ENCODE measurements at regions of chr9 and their contacts with region 1.

Region 1: DNA sequence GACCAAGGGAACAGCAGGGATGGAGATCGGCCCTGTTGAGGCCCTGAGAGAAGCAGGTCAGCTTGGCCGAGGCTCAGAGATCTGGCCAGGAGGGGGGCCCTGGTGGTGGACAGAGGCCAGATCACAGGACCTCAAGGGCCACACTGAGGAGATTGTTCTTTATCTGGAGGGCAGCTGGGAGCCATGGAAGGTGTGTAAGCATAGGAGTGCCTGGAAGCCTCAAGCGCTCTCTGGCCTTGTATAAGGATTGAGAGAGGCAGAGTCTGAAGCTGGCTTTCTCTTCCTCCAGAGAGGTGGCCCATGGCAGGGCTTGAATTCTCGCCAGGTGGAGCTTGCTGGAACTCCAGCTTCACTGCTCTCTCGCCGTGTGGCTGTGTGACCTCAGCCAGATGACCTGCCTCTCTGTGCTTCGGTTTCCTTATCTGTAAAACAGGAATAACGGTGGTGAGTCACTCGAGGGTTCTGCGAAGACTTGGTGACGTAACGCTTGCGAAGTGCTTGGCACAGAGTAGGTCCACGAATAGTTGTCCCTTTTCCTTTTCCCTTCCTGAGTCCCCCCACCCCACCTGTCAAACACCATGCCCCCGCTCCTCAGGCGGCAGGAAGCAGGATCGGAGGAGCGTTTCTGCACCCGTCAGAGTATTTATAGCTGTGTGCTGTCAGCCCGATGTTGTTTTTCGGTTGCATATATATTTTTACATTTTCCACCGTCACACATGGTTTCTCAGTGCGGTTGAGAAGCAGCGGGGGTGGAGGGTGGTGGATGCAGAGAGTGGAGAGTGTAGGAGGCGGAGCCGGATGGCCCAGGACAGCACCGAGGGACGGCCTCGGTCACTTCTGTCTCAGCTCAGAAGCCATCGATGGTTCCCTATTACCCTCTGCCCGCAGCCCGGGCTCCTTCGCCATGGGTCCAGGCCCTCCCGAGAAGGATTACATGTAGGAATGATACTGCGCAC is 17.0 kb upstream of the CRB2 start:
- DNase-seq: peak; percentile 76
- ATAC-seq: peak; percentile 56
- H3K4me3 Mint-ChIP-seq: peak overlapping the region; percentile 85
- H3K27ac Mint-ChIP-seq: peak overlapping the region; percentile 96
- H3K4me1 Mint-ChIP-seq: peaks cover 97% of the 10 kb centered on the region
- H3K27me3 Mint-ChIP-seq: no peaks in the 10 kb centered on the region
- CTCF ChIP-seq: no peak

Region 2: DNA sequence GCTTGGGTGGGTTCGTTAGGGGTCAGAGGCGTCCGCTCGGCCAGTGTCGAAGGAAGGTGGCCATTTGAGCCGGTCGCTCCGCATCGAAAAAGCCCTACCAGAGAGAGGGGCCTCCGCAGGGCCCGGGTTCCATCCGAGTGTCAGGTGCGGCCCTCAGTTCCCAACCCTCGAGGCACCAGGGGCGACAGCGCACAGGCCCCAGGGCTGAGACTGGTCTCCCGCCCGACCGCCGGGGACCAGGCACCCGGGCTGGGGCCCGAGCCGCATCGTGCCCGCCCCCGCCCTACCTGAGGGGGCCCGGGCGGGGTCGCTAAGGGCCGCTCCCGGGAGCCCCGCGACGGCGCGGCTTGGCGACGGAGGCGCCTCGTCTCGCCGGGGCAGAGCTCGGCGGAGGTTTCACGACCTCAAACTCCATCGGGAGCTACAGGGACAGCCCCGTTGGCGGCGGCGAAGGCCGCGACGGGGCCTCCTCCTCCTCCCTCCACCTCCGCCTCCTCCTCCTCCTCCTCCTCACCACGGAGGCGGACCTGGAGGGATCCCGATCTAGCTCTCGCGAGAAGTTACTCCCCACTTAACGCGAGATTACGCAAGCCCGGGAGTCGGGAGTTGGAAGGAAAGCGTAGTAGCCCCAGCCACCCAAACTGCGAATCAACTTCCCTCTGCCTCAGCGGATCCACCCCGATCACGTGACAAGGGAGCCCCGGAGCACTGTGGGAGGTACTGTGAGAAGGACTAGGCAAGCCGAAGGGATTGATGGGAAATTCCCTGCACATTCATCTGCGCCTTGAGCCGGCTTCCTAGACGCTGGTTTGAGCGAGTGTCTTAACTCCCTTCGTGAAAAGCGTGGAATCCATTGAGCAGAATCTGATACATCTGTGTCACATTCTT is 433.9 kb before region 1 on chr9 and contains the start of gene RC3H2:
- CTCF ChIA-PET with region 1: no interaction called
- POLR2A ChIA-PET with region 1: interaction called, 5 read pairs
- intact Hi-C with region 1: loop called (anchors 2 kb)
- DNase-seq: peak; percentile 86
- ATAC-seq: peak; percentile 89
- H3K4me3 Mint-ChIP-seq: peak within 1 kb of the TSS; percentile 92
- H3K27ac Mint-ChIP-seq: peak within 1 kb of the TSS; percentile 94
- H3K4me1 Mint-ChIP-seq: peaks cover 34% of the 10 kb centered on the region
- H3K27me3 Mint-ChIP-seq: no peaks in the 10 kb centered on the region
- CTCF ChIP-seq: no peak
- total RNA-seq, gene RC3H2: 50.8 and 62.7 TPM in 2 replicates

Region 3: DNA sequence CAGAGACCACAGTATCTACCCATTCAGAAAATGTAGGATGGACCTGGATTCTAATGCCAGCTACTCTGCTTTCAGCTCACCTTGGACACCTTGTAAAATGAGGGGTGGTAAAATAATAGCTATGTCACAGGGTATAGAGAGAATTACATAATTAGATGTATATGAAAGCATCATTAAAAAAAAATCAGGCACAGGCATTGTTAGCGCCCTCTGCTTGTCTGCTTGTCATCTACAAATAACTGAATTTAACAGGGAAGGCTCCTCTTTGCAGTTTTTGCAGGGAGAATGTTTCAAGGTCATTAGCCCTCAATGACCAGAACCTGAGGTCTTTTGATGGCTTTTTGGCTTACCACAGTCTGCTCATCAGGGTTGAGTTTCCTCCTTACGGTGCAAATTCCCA is 247.5 kb before region 1 on chr9:
- CTCF ChIA-PET with region 1: interaction called, 3 read pairs
- POLR2A ChIA-PET with region 1: interaction called, 8 read pairs
- intact Hi-C with region 1: loop called (anchors 2 kb)
- DNase-seq: no peak
- ATAC-seq: no peak
- H3K4me3 Mint-ChIP-seq: no peak overlapping the region
- H3K27ac Mint-ChIP-seq: no peak overlapping the region
- H3K4me1 Mint-ChIP-seq: peaks cover 75% of the 10 kb centered on the region
- H3K27me3 Mint-ChIP-seq: no peaks in the 10 kb centered on the region
- CTCF ChIP-seq: no peak

Region 4: GRCh38 chr9:123225374-123225813 is 113.6 kb before region 1 on chr9:
- CTCF ChIA-PET with region 1: interaction called, 15 read pairs
- POLR2A ChIA-PET with region 1: interaction called, 24 read pairs
- intact Hi-C with region 1: loop called (anchors 1 kb)
- DNase-seq: no peak
- ATAC-seq: peak; percentile 92
- H3K4me3 Mint-ChIP-seq: peak overlapping the region; percentile 45
- H3K27ac Mint-ChIP-seq: peak overlapping the region; percentile 84
- H3K4me1 Mint-ChIP-seq: peaks cover 55% of the 10 kb centered on the region
- H3K27me3 Mint-ChIP-seq: no peaks in the 10 kb centered on the region
- CTCF ChIP-seq: no peak

Region 5: DNA sequence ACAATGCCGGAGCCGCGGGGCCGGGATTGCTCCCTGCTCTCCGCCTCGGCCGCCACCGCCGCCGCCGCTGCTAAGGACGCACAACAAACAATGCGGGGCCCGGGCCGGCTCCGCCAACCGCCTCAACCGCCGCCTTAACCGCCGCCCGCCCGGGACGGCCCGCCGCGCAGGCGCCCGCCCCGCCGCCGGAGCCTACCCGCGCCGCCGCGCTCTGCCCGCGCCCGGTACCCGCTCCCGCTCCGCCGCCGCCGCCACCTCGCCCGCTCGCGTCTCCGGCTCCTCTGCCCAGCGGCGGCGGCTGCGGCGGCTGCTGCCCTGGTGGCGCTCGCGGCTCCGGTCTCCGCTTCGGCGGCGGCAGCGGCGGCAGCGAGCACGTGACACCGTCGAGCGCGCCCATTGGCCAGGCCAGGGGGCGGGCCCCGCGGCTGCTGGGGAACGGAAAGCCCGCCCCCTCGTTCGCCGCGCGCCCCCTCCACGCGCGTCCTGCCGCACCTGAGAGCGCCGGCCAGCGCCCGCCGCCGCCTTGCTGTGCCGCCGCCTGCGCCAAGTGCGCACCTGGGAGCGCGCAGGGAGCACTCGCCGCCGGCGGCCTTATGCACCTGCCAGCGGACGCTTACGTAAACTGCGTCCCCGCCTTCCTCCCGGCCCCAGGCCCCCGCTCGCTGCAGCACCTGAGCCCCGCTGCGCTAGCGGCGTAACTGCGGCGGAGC is 70.6 kb before region 1 on chr9 and contains the start of gene STRBP:
- CTCF ChIA-PET with region 1: interaction called, 3 read pairs
- POLR2A ChIA-PET with region 1: interaction called, 31 read pairs
- intact Hi-C with region 1: loop called (anchors 1 kb)
- DNase-seq: peak; percentile 96
- ATAC-seq: peak; percentile 91
- H3K4me3 Mint-ChIP-seq: peak within 1 kb of the TSS; percentile 83
- H3K27ac Mint-ChIP-seq: peak within 1 kb of the TSS; percentile 78
- H3K4me1 Mint-ChIP-seq: peaks cover 50% of the 10 kb centered on the region
- H3K27me3 Mint-ChIP-seq: no peaks in the 10 kb centered on the region
- CTCF ChIP-seq: no peak
- total RNA-seq, gene STRBP: 124 and 127 TPM in 2 replicates

Region 6: GRCh38 chr9:123312306-123312877 is 26.6 kb before region 1 on chr9:
- CTCF ChIA-PET with region 1: interaction called, 3 read pairs
- POLR2A ChIA-PET with region 1: interaction called, 304 read pairs
- intact Hi-C with region 1: loop called (anchors 1 kb)
- DNase-seq: no peak
- ATAC-seq: peak; percentile 28
- H3K4me3 Mint-ChIP-seq: no peak overlapping the region
- H3K27ac Mint-ChIP-seq: no peak overlapping the region
- H3K4me1 Mint-ChIP-seq: peaks cover 38% of the 10 kb centered on the region
- H3K27me3 Mint-ChIP-seq: no peaks in the 10 kb centered on the region
- CTCF ChIP-seq: no peak

Region 7: GRCh38 chr9:123349691-123350480 is 10.9 kb after region 1 on chr9:
- CTCF ChIA-PET with region 1: interaction called, 17 read pairs
- POLR2A ChIA-PET with region 1: interaction called, 25 read pairs
- intact Hi-C with region 1: no loop called
- DNase-seq: peak; percentile 56
- ATAC-seq: peak; percentile 92
- H3K4me3 Mint-ChIP-seq: peak overlapping the region; percentile 24
- H3K27ac Mint-ChIP-seq: peak overlapping the region; percentile 64
- H3K4me1 Mint-ChIP-seq: peaks cover 17% of the 10 kb centered on the region
- H3K27me3 Mint-ChIP-seq: no peaks in the 10 kb centered on the region
- CTCF ChIP-seq: no peak

Region 8: GRCh38 chr9:123360161-123361085 is 21.4 kb after region 1 on chr9:
- CTCF ChIA-PET with region 1: no interaction called
- POLR2A ChIA-PET with region 1: no interaction called
- intact Hi-C with region 1: no loop called
- DNase-seq: peak; percentile 52
- ATAC-seq: peak; percentile 90
- H3K4me3 Mint-ChIP-seq: no peak overlapping the region
- H3K27ac Mint-ChIP-seq: peak overlapping the region; percentile 41
- H3K4me1 Mint-ChIP-seq: peaks cover 16% of the 10 kb centered on the region
- H3K27me3 Mint-ChIP-seq: no peaks in the 10 kb centered on the region
- CTCF ChIP-seq: no peak

Region 9: GRCh38 chr9:123434619-123435528 is 95.9 kb after region 1 on chr9:
- CTCF ChIA-PET with region 1: no interaction called
- POLR2A ChIA-PET with region 1: no interaction called
- intact Hi-C with region 1: no loop called
- DNase-seq: no peak
- ATAC-seq: no peak
- H3K4me3 Mint-ChIP-seq: no peak overlapping the region
- H3K27ac Mint-ChIP-seq: no peak overlapping the region
- H3K4me1 Mint-ChIP-seq: no peaks in the 10 kb centered on the region
- H3K27me3 Mint-ChIP-seq: no peaks in the 10 kb centered on the region
- CTCF ChIP-seq: no peak

Region 10: DNA sequence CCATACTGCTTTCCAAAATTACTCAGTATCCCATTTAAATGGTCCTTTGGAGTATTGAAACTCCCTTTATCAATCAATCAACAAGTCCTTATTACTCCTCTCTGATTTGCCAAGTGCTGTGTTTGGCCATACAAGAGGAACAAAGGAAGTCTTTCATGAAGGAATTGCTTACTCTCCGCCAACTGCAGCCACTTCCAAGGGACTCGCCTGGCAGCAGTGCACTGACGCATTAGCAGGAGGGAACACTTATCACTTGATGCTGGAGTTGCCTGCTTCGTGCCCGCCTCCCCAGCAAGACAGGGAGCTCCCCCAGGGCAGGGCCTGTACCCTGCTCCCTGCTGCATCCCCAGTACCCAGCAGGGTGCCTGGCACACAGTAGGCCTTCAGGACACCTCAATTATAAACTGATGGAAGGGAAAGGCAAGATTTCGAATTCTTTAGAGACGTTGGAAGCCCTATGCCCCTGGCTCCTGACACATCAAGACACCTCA is 114.9 kb after region 1 on chr9:
- CTCF ChIA-PET with region 1: no interaction called
- POLR2A ChIA-PET with region 1: no interaction called
- intact Hi-C with region 1: no loop called
- DNase-seq: no peak
- ATAC-seq: no peak
- H3K4me3 Mint-ChIP-seq: no peak overlapping the region
- H3K27ac Mint-ChIP-seq: no peak overlapping the region
- H3K4me1 Mint-ChIP-seq: no peaks in the 10 kb centered on the region
- H3K27me3 Mint-ChIP-seq: no peaks in the 10 kb centered on the region
- CTCF ChIP-seq: no peak

Region 11: DNA sequence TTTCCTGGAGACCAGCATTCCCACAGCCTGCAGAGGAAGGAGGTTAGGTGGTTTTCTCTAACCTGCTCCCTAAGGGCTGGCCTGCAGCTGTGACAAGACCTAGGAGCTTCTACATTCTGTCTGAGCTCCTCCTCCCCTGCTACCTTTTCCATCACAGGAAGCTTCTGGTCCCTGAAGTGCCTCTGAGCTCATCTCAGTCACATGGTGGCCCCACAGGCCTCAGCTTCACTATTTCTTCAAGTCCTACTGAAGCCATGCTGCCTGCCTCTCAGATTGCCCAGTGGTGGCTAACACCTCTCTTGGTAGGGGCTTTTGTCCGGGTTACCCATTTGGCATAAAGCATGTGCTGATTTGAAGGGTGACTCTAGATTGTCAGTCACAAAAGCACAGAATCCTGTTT is 276.4 kb after region 1 on chr9:
- CTCF ChIA-PET with region 1: no interaction called
- POLR2A ChIA-PET with region 1: no interaction called
- intact Hi-C with region 1: no loop called
- DNase-seq: no peak
- ATAC-seq: peak; percentile 50
- H3K4me3 Mint-ChIP-seq: no peak overlapping the region
- H3K27ac Mint-ChIP-seq: no peak overlapping the region
- H3K4me1 Mint-ChIP-seq: peaks cover 21% of the 10 kb centered on the region
- H3K27me3 Mint-ChIP-seq: no peaks in the 10 kb centered on the region
- CTCF ChIP-seq: no peak

Measured in activated B cell treated with CpG ODN at 0.5 μM for 24 hours (primary cell).